OCI-LY7 (cell line): ENCODE measurements at regions of chr11 and their contacts with region 1.

Region 1: DNA sequence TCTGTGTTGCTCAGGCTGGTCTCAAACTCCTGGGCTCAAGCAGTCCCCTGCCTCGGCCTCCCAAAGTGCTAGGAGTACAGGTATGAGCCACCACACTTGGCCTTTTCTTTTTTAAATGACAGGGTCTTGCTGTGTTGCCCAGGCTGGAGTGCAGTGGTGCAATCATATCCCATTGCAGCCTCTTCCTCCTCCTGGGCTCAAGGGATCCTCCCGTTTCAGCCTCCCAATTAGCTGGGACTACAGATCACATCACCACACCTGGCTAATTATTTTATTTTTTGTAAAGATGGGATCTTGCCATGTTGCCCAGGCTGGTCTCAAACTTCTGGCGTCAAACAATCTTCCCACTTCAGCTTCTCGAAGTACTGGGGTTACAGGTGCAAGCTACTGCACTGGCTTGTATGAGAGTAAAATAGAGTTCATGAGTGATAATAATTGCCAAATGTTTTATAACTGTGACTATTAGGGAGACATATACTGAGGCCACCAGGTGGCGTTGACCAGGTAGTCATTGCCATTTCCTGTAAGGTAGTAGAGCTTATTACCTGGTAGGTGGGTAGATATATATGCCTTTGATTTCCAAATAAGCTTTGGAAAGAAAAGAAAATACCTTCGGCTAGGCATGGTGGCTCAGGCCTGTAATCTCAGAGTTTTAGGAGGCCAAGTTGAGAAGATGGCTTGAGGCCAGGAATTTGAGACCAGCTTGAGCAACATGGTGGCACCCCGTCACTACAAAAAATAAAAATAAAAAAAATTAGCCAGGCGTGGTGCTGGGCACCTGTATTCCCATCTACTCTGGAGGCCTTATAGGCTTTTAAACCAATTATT is 5.4 kb downstream of the FDX1 start:
- DNase-seq: peak; percentile 47
- H3K4me3 ChIP-seq: no peak overlapping the region
- H3K27ac ChIP-seq: no peak overlapping the region
- H3K4me1 ChIP-seq: peaks cover 32% of the 10 kb centered on the region
- CTCF ChIP-seq: peak; percentile 79

Region 2: DNA sequence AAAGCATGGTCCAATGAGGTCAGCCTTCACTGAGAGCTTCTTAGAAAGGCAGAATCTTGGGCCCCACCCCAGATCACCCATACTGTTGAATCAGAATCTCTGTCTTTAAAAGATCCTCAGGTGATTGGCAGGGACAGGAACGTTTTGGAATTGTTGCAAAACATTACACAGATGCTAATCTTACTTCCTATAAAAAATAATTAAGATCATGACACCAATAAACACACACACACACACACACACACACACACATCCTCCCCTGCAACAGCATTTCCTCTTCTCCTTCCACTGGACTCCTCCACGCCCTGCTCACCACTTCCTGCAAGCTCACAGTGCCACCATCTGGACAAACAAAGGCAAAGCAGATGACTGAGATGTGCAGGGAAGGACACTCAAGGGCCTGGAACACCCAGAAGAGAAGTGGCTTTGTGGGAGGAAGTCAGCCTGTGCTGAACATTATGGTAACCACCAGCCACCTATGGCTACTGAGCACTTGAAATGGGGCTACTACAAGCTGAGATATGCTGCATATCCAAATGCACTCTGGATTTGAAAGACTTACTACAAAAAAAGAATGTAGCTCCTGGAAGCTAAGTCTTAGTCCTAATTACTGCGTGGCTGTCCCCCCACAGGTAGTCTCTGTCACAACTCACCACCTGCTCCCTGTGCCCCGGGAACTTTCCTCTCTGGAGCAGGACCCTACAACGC is 1011.4 kb after region 1 on chr11:
- CTCF ChIA-PET with region 1: no interaction called
- POLR2A ChIA-PET with region 1: no interaction called
- intact Hi-C with region 1: loop called (anchors 5 kb)
- DNase-seq: peak; percentile 96
- H3K4me3 ChIP-seq: no peak overlapping the region
- H3K27ac ChIP-seq: no peak overlapping the region
- H3K4me1 ChIP-seq: peaks cover 53% of the 10 kb centered on the region
- CTCF ChIP-seq: peak; percentile 95